Natural killer cell (primary cell): ENCODE measurements at regions of chr1 and their contacts with region 1.

Region 1: GRCh38 chr1:203609979-203610493 is 16.6 kb upstream of the ATP2B4 start:
- DNase-seq: no peak
- ATAC-seq: no peak
- H3K4me3 ChIP-seq: no peak overlapping the region
- H3K4me3 Mint-ChIP-seq: no peak overlapping the region
- H3K27ac ChIP-seq: no peak overlapping the region
- H3K27ac Mint-ChIP-seq: no peak overlapping the region
- H3K4me1 ChIP-seq: peaks cover 34% of the 10 kb centered on the region
- H3K4me1 Mint-ChIP-seq: peaks cover 20 to 50% of the 10 kb centered on the region in 2 donors
- H3K27me3 ChIP-seq: no peaks in the 10 kb centered on the region
- H3K27me3 Mint-ChIP-seq: no peaks in the 10 kb centered on the region
- CTCF ChIP-seq: no peak

Region 2: DNA sequence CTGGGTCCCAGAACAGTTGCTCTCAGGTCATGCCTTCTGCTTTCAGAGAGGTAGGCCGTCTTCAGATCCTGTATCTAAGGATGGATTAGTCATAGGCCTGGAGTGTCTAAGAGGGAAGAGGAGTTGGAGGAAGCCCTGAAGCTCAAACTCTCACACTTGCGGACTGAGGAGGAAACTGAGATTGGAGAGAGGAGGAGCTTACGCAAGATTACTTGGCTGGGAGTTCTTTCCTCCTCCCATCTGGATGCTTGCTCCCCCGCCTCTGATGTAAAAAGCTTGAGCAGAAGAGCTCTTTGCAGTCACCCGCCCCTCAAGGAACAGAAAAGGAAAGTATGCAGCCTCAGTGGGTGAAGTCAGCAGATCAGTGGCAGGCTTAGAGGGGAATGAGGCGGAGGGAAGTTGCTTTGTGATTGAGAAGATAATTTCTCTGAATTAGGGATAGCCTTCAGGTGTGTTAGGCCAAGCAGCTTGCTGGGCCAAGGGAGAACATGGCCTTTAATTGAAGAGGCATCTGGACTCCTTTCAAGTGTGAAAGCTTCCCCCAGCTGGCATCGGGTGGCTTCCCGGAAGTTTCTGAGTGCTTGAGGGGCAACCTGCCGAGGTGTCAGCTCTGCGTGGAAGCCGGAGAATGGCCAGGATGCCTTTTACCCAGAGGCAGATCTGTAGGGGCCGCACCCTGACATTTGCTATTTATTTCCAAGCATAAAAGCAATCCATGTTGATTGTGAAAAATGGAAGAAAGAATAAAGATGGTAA is 475.9 kb before region 1 on chr1:
- intact Hi-C with region 1: no loop called
- DNase-seq: no peak
- ATAC-seq: no peak
- H3K4me3 ChIP-seq: no peak overlapping the region
- H3K4me3 Mint-ChIP-seq: no peak overlapping the region
- H3K27ac ChIP-seq: no peak overlapping the region
- H3K27ac Mint-ChIP-seq: no peak overlapping the region
- H3K4me1 ChIP-seq: peaks cover 8% of the 10 kb centered on the region
- H3K4me1 Mint-ChIP-seq: peaks cover 5 to 10% of the 10 kb centered on the region in 2 donors
- H3K27me3 ChIP-seq: no peaks in the 10 kb centered on the region
- H3K27me3 Mint-ChIP-seq: peaks cover 13 to 24% of the 10 kb centered on the region in 2 donors
- CTCF ChIP-seq: no peak

Region 3: GRCh38 chr1:203649999-203650855 is 40.2 kb after region 1 on chr1:
- intact Hi-C with region 1: loop called (anchors 1 kb)
- DNase-seq: peak; percentile 68 to 79
- ATAC-seq: peak; percentile 40 to 59 (median 42)
- H3K4me3 ChIP-seq: peak overlapping the region; percentile 26
- H3K4me3 Mint-ChIP-seq: peak overlapping the region; percentile 86
- H3K27ac ChIP-seq: peak overlapping the region; percentile 89
- H3K27ac Mint-ChIP-seq: peak overlapping the region; percentile 89 to 99
- H3K4me1 ChIP-seq: peaks cover 76% of the 10 kb centered on the region
- H3K4me1 Mint-ChIP-seq: peaks cover 66 to 70% of the 10 kb centered on the region in 2 donors
- H3K27me3 ChIP-seq: no peaks in the 10 kb centered on the region
- H3K27me3 Mint-ChIP-seq: no peaks in the 10 kb centered on the region
- CTCF ChIP-seq: no peak

Region 4: GRCh38 chr1:203663294-203663693 is 53.3 kb after region 1 on chr1:
- intact Hi-C with region 1: no loop called
- DNase-seq: peak in 1 of 2 donors; percentile 42
- ATAC-seq: peak; percentile 58 to 72 (median 69)
- H3K4me3 ChIP-seq: no peak overlapping the region
- H3K4me3 Mint-ChIP-seq: peak overlapping the region; percentile 58
- H3K27ac ChIP-seq: peak overlapping the region; percentile 41
- H3K27ac Mint-ChIP-seq: peak overlapping the region; percentile 89 to 93
- H3K4me1 ChIP-seq: peaks cover 57% of the 10 kb centered on the region
- H3K4me1 Mint-ChIP-seq: peaks cover 68 to 73% of the 10 kb centered on the region in 2 donors
- H3K27me3 ChIP-seq: no peaks in the 10 kb centered on the region
- H3K27me3 Mint-ChIP-seq: no peaks in the 10 kb centered on the region
- CTCF ChIP-seq: no peak

Region 5: GRCh38 chr1:204018463-204018862 is 408.4 kb after region 1 on chr1:
- intact Hi-C with region 1: no loop called
- DNase-seq: no peak
- ATAC-seq: no peak
- H3K4me3 ChIP-seq: no peak overlapping the region
- H3K4me3 Mint-ChIP-seq: no peak overlapping the region
- H3K27ac ChIP-seq: no peak overlapping the region
- H3K27ac Mint-ChIP-seq: no peak overlapping the region
- H3K4me1 ChIP-seq: no peaks in the 10 kb centered on the region
- H3K4me1 Mint-ChIP-seq: no peaks in the 10 kb centered on the region
- H3K27me3 ChIP-seq: no peaks in the 10 kb centered on the region
- H3K27me3 Mint-ChIP-seq: peaks cover 0 to 6% of the 10 kb centered on the region in 2 donors
- CTCF ChIP-seq: no peak

Region 6: GRCh38 chr1:204446370-204447111 is 836.5 kb after region 1 on chr1:
- intact Hi-C with region 1: no loop called
- DNase-seq: peak; percentile 65 to 89
- ATAC-seq: peak; percentile 89 to 99 (median 97)
- H3K4me3 ChIP-seq: no peak overlapping the region
- H3K4me3 Mint-ChIP-seq: no peak overlapping the region
- H3K27ac ChIP-seq: no peak overlapping the region
- H3K27ac Mint-ChIP-seq: peak overlapping the region; percentile 76 to 86
- H3K4me1 ChIP-seq: peaks cover 13% of the 10 kb centered on the region
- H3K4me1 Mint-ChIP-seq: peaks cover 4% of the 10 kb centered on the region in 2 donors
- H3K27me3 ChIP-seq: no peaks in the 10 kb centered on the region
- H3K27me3 Mint-ChIP-seq: no peaks in the 10 kb centered on the region
- CTCF ChIP-seq: peak; percentile 74